ENCODE measurements at regions of chr4 and their contacts with region 1.

Region 1: DNA sequence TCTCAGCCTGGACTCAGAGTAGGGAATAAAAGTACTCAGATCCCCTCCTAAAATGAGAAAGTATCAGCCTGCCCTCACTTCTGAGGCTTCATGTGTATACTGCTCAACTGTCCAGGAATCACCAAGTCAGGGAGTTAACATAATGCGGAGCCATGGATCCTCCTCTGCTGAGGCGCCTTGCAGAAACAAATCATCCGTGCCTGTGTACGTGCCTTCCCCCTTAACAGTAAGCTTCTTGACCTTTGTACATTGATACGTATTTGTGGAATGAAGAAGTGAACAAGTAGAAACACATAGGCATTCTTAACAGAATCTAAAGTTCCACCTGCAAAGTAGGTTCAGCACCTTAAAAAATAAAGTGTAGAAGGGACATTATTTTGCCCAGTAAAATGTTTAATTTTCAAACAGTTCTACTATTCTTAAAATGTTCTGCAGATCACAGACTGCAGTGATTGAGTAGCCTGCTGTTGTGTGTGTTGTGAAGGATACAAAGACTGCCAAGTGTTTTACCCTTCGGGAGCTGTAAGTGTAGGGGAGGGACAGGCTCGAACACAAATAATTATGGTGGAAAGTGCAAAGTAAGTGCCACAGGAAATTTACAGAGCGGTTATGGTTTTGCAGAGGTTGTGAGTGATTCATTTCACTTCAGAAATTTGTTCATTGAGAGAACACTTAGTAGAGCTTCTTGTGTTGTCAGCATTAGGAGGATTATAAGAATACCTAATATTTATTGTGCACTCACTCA is 61.9 kb downstream of the ARHGAP10 start:
- DNase-seq: no peak
- H3K4me3 Mint-ChIP-seq: peak overlapping the region; percentile 61
- H3K27ac Mint-ChIP-seq: peak overlapping the region; percentile 80
- H3K4me1 Mint-ChIP-seq: peaks cover 58% of the 10 kb centered on the region
- H3K27me3 Mint-ChIP-seq: peaks cover 2% of the 10 kb centered on the region

Region 2: DNA sequence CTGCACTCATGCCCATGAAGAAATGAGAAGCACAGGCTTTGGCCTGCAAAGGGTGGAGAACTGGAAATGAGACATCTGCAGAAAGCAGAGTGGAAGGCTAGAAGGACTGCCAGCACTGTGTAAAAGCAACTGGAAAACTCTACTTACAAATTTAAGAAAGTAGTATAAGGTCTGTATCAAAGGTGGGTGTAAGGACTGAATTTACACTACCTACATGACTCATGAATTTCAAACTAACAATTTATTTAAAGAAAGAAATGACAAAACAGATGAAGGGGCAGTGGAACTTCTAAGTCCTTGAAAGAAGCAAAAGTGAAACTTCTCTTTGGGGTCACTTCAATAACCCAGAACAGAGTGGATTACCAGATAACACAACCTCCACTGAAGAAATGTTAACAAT is 1343.2 kb before region 1 on chr4:
- intact Hi-C with region 1: loop called (anchors 5 kb)
- DNase-seq: no peak
- H3K4me3 Mint-ChIP-seq: peak overlapping the region; percentile 38
- H3K27ac Mint-ChIP-seq: peak overlapping the region; percentile 68
- H3K4me1 Mint-ChIP-seq: peaks cover 40% of the 10 kb centered on the region
- H3K27me3 Mint-ChIP-seq: no peaks in the 10 kb centered on the region

Region 3: DNA sequence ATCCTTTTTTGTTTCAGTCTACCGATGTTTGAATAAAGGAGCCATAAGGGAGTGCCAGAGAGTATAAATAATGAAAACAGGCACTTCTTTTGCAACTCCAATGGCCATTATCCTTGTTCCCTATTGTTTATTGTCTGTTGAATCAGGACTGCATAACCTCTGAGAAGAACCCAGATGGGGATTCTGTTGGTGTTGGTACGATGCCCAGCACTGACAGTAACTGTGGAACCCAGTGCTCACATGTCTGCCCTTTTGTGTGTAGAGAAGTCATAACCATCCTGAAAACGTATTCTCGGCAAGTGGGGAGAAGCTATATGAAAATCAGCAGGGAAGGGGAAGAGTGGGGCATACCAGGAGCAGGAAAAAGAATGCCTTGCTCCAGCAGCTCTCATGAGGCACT is 508.0 kb before region 1 on chr4:
- intact Hi-C with region 1: no loop called
- DNase-seq: no peak
- H3K4me3 Mint-ChIP-seq: no peak overlapping the region
- H3K27ac Mint-ChIP-seq: no peak overlapping the region
- H3K4me1 Mint-ChIP-seq: no peaks in the 10 kb centered on the region
- H3K27me3 Mint-ChIP-seq: no peaks in the 10 kb centered on the region

Region 4: GRCh38 chr4:147780137-147780777 is 13.5 kb before region 1 on chr4:
- intact Hi-C with region 1: loop called (anchors 2 kb)
- DNase-seq: no peak
- H3K4me3 Mint-ChIP-seq: no peak overlapping the region
- H3K27ac Mint-ChIP-seq: no peak overlapping the region
- H3K4me1 Mint-ChIP-seq: peaks cover 27% of the 10 kb centered on the region
- H3K27me3 Mint-ChIP-seq: no peaks in the 10 kb centered on the region

Region 5: GRCh38 chr4:147843162-147843561 is 49.4 kb after region 1 on chr4:
- intact Hi-C with region 1: loop called (anchors 1 kb)
- DNase-seq: no peak
- H3K4me3 Mint-ChIP-seq: no peak overlapping the region
- H3K27ac Mint-ChIP-seq: no peak overlapping the region
- H3K4me1 Mint-ChIP-seq: no peaks in the 10 kb centered on the region
- H3K27me3 Mint-ChIP-seq: peaks cover 21% of the 10 kb centered on the region